ENCODE measurements at regions of chr6 and their contacts with region 1.

Region 1: GRCh38 chr6:96923871-96924493 is 546 bp upstream of the KLHL32 start:
- DNase-seq: no peak
- ATAC-seq: peak; percentile 80
- H3K4me3 ChIP-seq: peak overlapping the region; percentile 48
- H3K27ac ChIP-seq: peak overlapping the region; percentile 90
- H3K4me1 ChIP-seq: peaks cover 11 to 35% of the 10 kb centered on the region in 2 experiments
- H3K27me3 ChIP-seq: no peaks in the 10 kb centered on the region
- CTCF ChIP-seq: 0 out of 6 replicates have a peak, but pooled peaks of 1 of the 3 experiments have one; percentile 1
- EP300 ChIP-seq: no peak
- POLR2A ChIP-seq: peak; percentile 84
- RAD21 ChIP-seq: no peak

Region 2: DNA sequence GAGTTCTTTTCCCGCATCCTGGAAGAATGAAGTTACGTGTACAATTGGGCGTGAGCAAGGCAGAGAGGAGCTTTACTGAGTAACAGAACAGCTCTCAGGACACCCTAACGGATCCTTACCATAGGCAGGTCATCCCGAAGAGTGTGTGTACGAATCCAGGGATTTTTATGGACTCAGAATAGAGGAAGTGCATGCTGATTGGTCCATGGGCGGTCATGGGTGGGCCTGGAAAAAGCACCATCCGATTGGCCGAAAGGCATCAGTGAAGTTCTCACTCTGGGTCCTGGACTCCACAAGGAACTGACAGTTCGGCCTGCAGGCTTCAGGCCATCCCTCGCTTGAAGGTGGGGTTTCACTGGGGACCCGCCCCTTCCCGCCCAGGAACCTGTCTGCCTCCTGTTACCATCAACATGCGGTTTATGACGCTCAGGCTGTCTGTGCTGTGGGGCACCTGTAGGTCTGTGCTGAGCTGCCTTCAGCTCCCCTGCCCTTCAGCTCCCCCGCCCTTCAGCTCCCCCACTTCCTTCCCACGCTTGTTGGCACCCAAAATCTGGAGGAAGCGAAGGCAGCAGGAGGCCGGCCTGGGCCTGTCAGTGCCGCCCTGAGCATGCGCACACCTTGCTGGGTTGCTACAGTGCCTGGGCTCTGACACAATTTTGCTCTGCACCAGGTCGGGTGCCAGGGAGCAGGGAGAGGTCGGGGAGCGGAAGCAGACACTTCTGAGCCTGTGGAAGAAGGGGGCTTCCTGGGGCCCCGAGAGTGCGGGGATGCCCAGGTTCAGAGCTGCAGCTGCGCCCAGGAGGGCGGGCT is 1404.5 kb before region 1 on chr6:
- CTCF ChIA-PET with region 1: no interaction called
- POLR2A ChIA-PET with region 1: no interaction called
- in situ Hi-C with region 1: no loop called
- intact Hi-C with region 1: loop called (anchors 10 kb)
- DNase-seq: peak; percentile 53 to 97 (median 66)
- ATAC-seq: peak; percentile 96
- H3K4me3 ChIP-seq: peak overlapping the region; percentile 60
- H3K27ac ChIP-seq: peak overlapping the region; percentile 90
- H3K4me1 ChIP-seq: peaks cover 6 to 12% of the 10 kb centered on the region in 2 experiments; a peak in 4 of 5 replicates
- H3K27me3 ChIP-seq: no peaks in the 10 kb centered on the region
- CTCF ChIP-seq: no peak
- EP300 ChIP-seq: no peak
- POLR2A ChIP-seq: peak; percentile 98
- RAD21 ChIP-seq: no peak

Region 3: GRCh38 chr6:96521644-96522464 is 402.1 kb before region 1 on chr6 and contains the start of gene UFL1:
- CTCF ChIA-PET with region 1: no interaction called
- POLR2A ChIA-PET with region 1: no interaction called
- in situ Hi-C with region 1: no loop called
- intact Hi-C with region 1: loop called (anchors 10 kb)
- DNase-seq: peak; percentile 78 to 96 (median 82)
- ATAC-seq: peak; percentile 95
- H3K4me3 ChIP-seq: peak within 1 kb of the TSS; percentile 87
- H3K27ac ChIP-seq: peak within 1 kb of the TSS; percentile 97
- H3K4me1 ChIP-seq: peaks cover 2 to 3% of the 10 kb centered on the region in 2 experiments; a peak in 3 of 5 replicates
- H3K27me3 ChIP-seq: no peaks in the 10 kb centered on the region
- CTCF ChIP-seq: 0 out of 6 replicates have a peak, but pooled peaks of 1 of the 3 experiments have one; percentile 6
- EP300 ChIP-seq: peak; percentile 15
- POLR2A ChIP-seq: peak; percentile 97
- RAD21 ChIP-seq: no peak
- polyA plus RNA-seq, gene UFL1: 21.3 to 23.1 TPM

Region 4: DNA sequence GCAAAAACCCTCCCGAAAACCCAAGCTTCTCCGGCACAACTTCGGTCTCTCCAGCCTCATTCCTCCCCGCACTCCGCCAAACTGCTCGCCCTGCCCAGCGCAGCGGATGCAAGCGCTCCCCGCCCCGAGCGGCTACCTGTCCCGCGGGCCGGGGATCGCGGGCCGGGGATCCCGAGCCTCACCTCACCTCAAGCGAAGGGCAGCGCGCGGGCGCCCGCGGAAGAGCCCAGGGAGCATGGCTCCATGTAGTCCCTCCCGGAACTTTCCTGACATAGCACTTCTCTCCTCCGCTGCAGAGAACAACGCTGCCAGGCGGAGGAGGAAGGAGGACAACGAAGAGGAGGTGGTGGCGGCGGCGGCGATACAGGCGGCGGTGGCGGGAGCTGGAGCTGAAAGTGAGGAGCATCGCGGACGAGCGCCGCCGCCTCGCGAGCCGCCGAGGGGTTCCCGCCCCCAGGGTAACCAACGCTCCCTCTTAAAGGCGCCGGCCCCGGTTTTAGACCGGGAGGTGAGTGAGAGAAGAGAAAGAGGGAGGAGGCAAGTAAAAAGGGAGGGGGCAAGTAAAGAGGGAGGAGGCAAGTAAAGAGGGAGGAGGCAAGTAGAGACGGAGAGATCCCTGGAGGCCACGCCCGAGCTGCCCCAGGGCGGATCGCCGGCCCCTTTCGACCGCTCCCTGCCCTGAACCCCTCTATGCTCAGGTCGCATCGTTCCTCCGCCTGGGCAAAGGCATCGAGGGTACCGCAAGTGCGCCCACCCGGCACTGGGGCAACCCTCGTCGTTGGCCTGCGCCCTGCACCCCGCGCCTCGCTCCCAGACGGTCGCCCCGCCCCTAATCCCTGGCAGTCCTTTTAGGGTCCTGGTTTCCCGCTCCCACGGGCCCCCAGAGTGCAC is 86.7 kb before region 1 on chr6 and contains the start of gene GPR63:
- CTCF ChIA-PET with region 1: no interaction called
- POLR2A ChIA-PET with region 1: no interaction called
- in situ Hi-C with region 1: no loop called
- intact Hi-C with region 1: loop called (anchors 2 kb)
- DNase-seq: peak; percentile 90 to 93 (median 91)
- ATAC-seq: peak; percentile 94
- H3K4me3 ChIP-seq: peak within 1 kb of the TSS; percentile 93
- H3K27ac ChIP-seq: peak within 1 kb of the TSS; percentile 51
- H3K4me1 ChIP-seq: peaks cover 4 to 7% of the 10 kb centered on the region in 2 experiments; a peak in 4 of 5 replicates
- H3K27me3 ChIP-seq: peaks cover 0 to 9% of the 10 kb centered on the region in 2 experiments; a peak in 2 of 5 replicates
- CTCF ChIP-seq: no peak
- EP300 ChIP-seq: no peak
- POLR2A ChIP-seq: peak; percentile 85
- RAD21 ChIP-seq: no peak
- polyA plus RNA-seq, gene GPR63: 2.1 to 2.5 TPM

Region 5: DNA sequence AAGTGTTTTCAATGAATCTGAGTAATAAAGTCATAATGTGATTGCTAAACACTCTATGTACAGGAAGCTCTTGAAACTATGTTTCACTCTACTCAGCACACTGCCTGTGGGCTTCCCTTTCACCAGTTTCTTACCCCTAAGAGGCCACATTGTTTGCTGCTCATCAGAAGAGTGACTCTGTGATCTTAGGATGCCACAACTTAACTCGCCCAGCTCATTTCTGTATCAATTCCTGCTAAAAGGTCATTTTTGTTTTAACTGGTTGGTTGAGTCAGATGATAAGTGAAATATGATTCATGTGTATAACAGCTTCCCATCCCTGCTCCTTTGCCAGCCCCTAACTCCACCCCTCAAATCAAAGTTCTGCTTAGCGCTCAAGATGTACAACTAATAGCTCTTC is 16.5 kb before region 1 on chr6:
- CTCF ChIA-PET with region 1: no interaction called
- POLR2A ChIA-PET with region 1: interaction called, 11 read pairs
- in situ Hi-C with region 1: no loop called
- intact Hi-C with region 1: no loop called
- DNase-seq: no peak
- ATAC-seq: no peak
- H3K4me3 ChIP-seq: no peak overlapping the region
- H3K27ac ChIP-seq: no peak overlapping the region
- H3K4me1 ChIP-seq: no peaks in the 10 kb centered on the region
- H3K27me3 ChIP-seq: peaks cover 0 to 3% of the 10 kb centered on the region in 2 experiments; a peak in 3 of 5 replicates
- CTCF ChIP-seq: no peak
- EP300 ChIP-seq: no peak
- POLR2A ChIP-seq: no peak
- RAD21 ChIP-seq: no peak